Posterior vena cava (tissue), 2 donors: ENCODE measurements at regions of chr11 and their contacts with region 1.

Region 1: GRCh38 chr11:70608568-70609470 is 210.5 kb downstream of the CTTN start:
- DNase-seq: no peak

Region 2: GRCh38 chr11:70244698-70245097 is 364.1 kb before region 1 on chr11:
- intact Hi-C with region 1: no loop called
- DNase-seq: no peak

Region 3: DNA sequence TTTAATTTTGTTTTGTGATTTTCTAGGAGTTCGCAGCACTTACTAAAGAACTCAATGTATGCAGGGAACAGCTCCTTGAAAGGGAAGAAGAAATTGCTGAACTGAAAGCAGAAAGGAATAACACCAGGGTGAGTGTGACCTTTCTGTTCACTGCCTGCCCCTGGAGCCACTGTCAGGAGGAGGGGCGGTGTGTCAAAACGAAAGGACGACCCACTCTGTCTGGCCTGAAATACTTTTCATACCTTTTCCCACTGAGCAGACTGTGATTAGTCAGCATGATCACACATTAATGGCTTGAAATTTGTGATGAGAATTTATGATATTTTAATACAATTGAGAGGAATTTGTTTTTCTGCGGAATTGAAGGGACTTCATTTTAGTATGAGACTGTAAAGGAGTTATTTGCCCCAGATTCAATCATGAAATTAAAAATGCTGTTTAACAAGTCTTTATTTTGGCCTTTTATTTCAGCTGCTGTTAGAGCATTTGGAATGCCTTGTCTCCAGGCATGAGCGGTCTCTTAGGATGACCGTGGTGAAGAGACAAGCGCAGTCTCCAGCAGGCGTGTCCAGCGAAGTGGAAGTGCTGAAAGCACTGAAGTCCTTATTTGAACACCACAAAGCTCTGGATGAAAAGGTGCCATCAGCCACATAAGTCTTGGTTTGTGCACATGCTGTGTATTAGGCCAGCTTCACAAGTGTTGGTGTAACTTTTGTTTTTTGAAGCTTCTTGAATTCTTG is 284.3 kb before region 1 on chr11:
- intact Hi-C with region 1: no loop called
- DNase-seq: peak; percentile 67

Region 4: GRCh38 chr11:70680781-70681281 is 72.0 kb after region 1 on chr11:
- intact Hi-C with region 1: loop called in 1 of 2 experiments (anchors 10 kb)
- DNase-seq: no peak

Region 5: GRCh38 chr11:71372693-71373657 is 764.2 kb after region 1 on chr11:
- intact Hi-C with region 1: loop called in 1 of 2 experiments (anchors 10 kb)
- DNase-seq: no peak